H1 (cell line): ENCODE measurements at regions of chr9 and their contacts with region 1.

Region 1: DNA sequence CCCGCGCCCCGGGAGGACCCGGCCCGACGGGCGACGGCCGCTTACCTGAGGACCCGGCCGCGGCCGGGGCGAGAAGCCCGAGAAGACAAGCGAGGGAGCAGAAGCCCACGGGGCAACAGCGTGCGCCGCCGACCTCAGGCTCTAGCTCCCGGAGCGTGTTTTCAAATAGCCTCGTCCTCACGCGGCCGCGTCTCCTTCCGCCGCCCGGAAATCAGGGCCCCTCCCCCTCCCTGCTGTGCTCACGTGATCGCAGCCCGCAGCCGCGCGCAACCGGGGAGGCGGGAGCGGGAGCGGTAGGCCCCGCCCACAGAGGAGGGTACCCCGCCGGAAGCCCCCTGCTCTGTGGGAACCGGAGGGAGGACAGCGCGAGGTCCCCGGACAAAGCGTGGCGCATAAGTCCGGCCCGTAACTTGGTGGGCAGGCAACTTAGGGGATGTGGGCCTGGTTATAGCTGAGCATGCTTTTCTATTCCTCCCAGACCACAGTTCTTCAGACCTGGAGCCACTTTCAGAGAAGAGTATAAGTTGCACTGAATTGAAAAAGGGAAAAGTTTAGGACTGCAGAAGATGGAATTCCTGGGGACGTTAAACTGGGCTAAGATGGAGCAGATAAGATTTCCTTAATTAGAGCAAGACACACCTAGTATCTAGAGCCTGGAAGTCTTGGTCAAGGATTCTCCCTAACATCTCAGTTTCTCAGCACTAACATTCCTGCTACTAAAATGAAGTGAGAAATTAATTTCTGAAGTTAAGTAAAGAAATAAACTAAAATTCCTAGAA is at the start of gene TEX10:
- DNase-seq: peak; percentile 75 to 97
- H3K4me3 ChIP-seq: peak within 1 kb of the TSS; percentile 88 to 99 (median 96)
- H3K27ac ChIP-seq: peak within 1 kb of the TSS; percentile 97
- H3K4me1 ChIP-seq: peaks cover 2 to 13% (median 6%) of the 10 kb centered on the region in 4 experiments; a peak in 3 of 7 replicates
- H3K27me3 ChIP-seq: no peaks in the 10 kb centered on the region
- CTCF ChIP-seq: no peak
- EP300 ChIP-seq: peak in 1 of 2 experiments; percentile 61; a peak in 1 of 3 replicates
- POLR2A ChIP-seq: peak; percentile 84 to 92
- RAD21 ChIP-seq: no peak
- total RNA-seq, gene TEX10: 77.6 and 81.0 TPM in 2 replicates

Region 2: GRCh38 chr9:100309992-100310391 is 42.9 kb before region 1 on chr9:
- CTCF ChIA-PET with region 1: no interaction called
- POLR2A ChIA-PET with region 1: no interaction called
- DNase-seq: no peak
- H3K4me3 ChIP-seq: no peak overlapping the region
- H3K27ac ChIP-seq: no peak overlapping the region
- H3K4me1 ChIP-seq: no peaks in the 10 kb centered on the region
- H3K27me3 ChIP-seq: no peaks in the 10 kb centered on the region
- CTCF ChIP-seq: no peak
- EP300 ChIP-seq: no peak
- POLR2A ChIP-seq: no peak
- RAD21 ChIP-seq: no peak

Region 3: DNA sequence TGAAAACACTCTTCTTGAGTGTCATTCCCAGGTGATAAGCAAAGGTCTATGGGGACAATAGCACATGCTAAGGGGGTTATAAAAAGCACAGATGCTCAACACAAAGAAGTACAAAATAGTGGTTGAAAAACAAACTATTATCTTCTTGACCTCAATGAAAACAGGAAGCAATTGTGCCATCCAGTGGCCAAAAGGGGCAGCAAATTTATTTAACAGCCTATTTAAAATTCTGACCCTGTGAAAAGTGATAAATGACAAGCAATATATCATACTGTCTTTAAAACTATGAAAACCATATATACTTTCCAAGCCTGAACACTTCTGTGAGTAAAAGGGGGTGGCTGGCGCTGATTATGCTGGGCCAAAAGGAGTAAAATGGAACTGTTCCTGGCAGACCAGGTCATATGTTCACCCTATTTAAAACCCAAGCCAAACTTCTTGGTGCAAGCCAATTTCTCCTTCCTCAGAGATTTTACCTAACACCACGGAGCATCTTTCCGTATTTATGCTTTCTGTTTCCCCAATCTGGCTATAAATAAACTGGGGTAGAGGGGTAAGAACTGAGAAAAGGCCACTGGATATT is 29.9 kb before region 1 on chr9:
- CTCF ChIA-PET with region 1: interaction called, 17 read pairs
- POLR2A ChIA-PET with region 1: interaction called, 9 read pairs
- DNase-seq: peak in 1 of 2 experiments; percentile 7
- H3K4me3 ChIP-seq: no peak overlapping the region
- H3K27ac ChIP-seq: no peak overlapping the region
- H3K4me1 ChIP-seq: no peaks in the 10 kb centered on the region
- H3K27me3 ChIP-seq: no peaks in the 10 kb centered on the region
- CTCF ChIP-seq: peak in 2 of 3 experiments; percentile 46 to 68; a peak in 2 of 4 replicates
- EP300 ChIP-seq: no peak
- POLR2A ChIP-seq: no peak
- RAD21 ChIP-seq: peak; percentile 45 to 55

Region 4: GRCh38 chr9:100341889-100342288 is 11.0 kb before region 1 on chr9:
- CTCF ChIA-PET with region 1: interaction called, 3 read pairs
- POLR2A ChIA-PET with region 1: interaction called, 88 read pairs
- DNase-seq: no peak
- H3K4me3 ChIP-seq: no peak overlapping the region
- H3K27ac ChIP-seq: no peak overlapping the region
- H3K4me1 ChIP-seq: peaks cover 2 to 4% (median 3%) of the 10 kb centered on the region in 4 experiments; a peak in 5 of 7 replicates
- H3K27me3 ChIP-seq: no peaks in the 10 kb centered on the region
- CTCF ChIP-seq: no peak
- EP300 ChIP-seq: no peak
- POLR2A ChIP-seq: no peak
- RAD21 ChIP-seq: no peak

Region 5: GRCh38 chr9:100366121-100366520 is 13.2 kb after region 1 on chr9:
- CTCF ChIA-PET with region 1: interaction called, 5 read pairs
- POLR2A ChIA-PET with region 1: interaction called, 32 read pairs
- DNase-seq: no peak
- H3K4me3 ChIP-seq: no peak overlapping the region
- H3K27ac ChIP-seq: no peak overlapping the region
- H3K4me1 ChIP-seq: no peaks in the 10 kb centered on the region
- H3K27me3 ChIP-seq: no peaks in the 10 kb centered on the region
- CTCF ChIP-seq: no peak
- EP300 ChIP-seq: no peak
- POLR2A ChIP-seq: no peak
- RAD21 ChIP-seq: no peak

Region 6: GRCh38 chr9:100426530-100427428 is 73.9 kb after region 1 on chr9 and contains the start of gene MSANTD3:
- CTCF ChIA-PET with region 1: no interaction called
- POLR2A ChIA-PET with region 1: interaction called, 23 read pairs
- DNase-seq: peak in 1 of 2 experiments; percentile 74
- H3K4me3 ChIP-seq: peak within 1 kb of the TSS; percentile 78 to 99 (median 89)
- H3K27ac ChIP-seq: peak within 1 kb of the TSS; percentile 72; the same call in 1 of the 2 replicates
- H3K4me1 ChIP-seq: peaks cover 0 to 13% (median 8%) of the 10 kb centered on the region in 4 experiments; a peak in 4 of 7 replicates
- H3K27me3 ChIP-seq: no peaks in the 10 kb centered on the region
- CTCF ChIP-seq: peak in 2 of 3 experiments; percentile 2 to 8; a peak in 2 of 4 replicates
- EP300 ChIP-seq: no peak
- POLR2A ChIP-seq: peak in 1 of 2 experiments; percentile 32; a peak in 2 of 3 replicates
- RAD21 ChIP-seq: no peak
- total RNA-seq, gene MSANTD3: 39.8 and 41.3 TPM in 2 replicates

Region 7: GRCh38 chr9:100499460-100499859 is 146.5 kb after region 1 on chr9:
- CTCF ChIA-PET with region 1: no interaction called
- POLR2A ChIA-PET with region 1: no interaction called
- DNase-seq: no peak
- H3K4me3 ChIP-seq: no peak overlapping the region
- H3K27ac ChIP-seq: no peak overlapping the region
- H3K4me1 ChIP-seq: peaks cover 0 to 5% (median 3%) of the 10 kb centered on the region in 4 experiments; a peak in 2 of 7 replicates
- H3K27me3 ChIP-seq: no peaks in the 10 kb centered on the region
- CTCF ChIP-seq: no peak
- EP300 ChIP-seq: no peak
- POLR2A ChIP-seq: no peak
- RAD21 ChIP-seq: no peak